AG04450 (cell line): ENCODE measurements at regions of chr1 and their contacts with region 1.

Region 1: DNA sequence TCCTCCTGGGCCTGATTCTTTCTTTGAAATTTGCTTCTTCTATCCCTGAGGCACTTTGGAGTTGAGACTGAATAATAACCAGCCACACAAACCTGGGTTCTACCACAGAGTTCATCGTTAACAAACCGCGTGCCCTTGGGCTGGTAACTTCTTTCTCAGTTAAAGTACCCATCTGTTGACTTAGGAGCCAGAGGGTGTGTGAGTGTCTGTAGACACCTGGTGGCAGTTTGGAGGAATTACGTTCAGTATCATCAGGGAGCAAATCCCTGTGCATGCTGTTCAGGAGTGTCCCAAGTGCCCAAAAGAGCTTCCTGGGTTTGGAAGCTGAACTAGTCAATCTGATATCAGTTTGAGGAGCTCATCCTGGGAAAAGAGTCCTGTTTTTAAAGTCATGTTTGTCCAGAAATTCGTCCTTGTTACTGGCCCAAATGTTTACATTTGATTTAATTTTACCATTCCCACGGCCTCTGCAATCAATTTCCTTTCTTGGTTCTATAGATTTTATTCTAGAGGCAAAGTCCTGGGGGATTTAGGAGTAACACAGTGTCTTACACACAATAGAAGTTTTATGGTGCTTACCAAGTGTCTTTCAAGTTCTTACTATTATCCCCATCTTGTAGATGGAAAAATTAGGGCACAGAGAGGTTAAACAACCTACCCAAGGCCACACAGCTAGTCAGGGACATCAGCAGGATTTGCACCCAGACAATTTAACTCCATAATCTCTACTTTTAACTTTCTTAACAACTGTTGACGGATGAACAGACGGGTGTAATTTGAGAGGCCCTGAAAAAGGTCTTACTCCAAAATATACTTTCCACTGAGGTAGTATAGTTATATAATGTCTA is 26.7 kb upstream of the RPTN start:
- DNase-seq: peak; percentile 26
- H3K4me3 ChIP-seq: no peak overlapping the region
- H3K27ac ChIP-seq: no peak overlapping the region
- H3K27me3 ChIP-seq: no peaks in the 10 kb centered on the region
- CTCF ChIP-seq: peak; percentile 84

Region 2: DNA sequence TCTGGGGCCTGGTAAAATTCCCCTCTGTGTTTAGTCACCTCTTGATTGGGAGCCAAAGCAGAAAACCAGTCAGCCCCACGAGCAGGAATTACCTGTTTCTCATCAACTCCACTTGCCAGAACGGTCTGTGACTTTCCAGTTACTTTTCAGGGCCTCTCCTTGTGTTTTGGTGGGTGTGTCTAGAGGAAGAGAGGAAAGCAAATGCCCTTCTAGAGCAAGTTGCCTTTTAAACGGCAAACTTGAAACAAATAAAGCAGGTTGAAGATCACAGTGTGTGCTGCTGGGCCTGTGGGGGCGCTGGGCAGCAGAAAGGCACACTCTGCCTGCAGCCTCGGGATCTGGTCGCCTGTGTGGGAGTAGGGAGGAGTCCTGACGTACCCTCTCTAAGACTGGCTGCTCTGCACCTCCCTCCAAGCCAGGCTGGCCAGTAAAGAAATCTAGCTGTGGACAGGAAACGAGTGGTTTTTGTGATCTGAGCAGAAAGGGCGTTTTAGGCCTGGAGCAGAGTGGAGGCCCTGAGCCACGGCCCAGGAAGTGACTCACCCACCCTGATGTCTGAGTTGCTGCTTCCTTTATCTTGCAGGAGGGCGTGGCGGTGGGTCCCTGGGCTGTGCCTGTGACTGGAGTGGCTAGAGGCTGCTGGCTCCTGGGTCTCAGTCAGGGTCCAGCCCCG is 137.9 kb before region 1 on chr1:
- CTCF ChIA-PET with region 1: interaction called, 98 read pairs
- POLR2A ChIA-PET with region 1: no interaction called
- DNase-seq: peak; percentile 97
- H3K4me3 ChIP-seq: peak overlapping the region; percentile 50
- H3K27ac ChIP-seq: peak overlapping the region; percentile 99
- H3K27me3 ChIP-seq: peaks cover 3% of the 10 kb centered on the region
- CTCF ChIP-seq: peak; percentile 75

Region 3: DNA sequence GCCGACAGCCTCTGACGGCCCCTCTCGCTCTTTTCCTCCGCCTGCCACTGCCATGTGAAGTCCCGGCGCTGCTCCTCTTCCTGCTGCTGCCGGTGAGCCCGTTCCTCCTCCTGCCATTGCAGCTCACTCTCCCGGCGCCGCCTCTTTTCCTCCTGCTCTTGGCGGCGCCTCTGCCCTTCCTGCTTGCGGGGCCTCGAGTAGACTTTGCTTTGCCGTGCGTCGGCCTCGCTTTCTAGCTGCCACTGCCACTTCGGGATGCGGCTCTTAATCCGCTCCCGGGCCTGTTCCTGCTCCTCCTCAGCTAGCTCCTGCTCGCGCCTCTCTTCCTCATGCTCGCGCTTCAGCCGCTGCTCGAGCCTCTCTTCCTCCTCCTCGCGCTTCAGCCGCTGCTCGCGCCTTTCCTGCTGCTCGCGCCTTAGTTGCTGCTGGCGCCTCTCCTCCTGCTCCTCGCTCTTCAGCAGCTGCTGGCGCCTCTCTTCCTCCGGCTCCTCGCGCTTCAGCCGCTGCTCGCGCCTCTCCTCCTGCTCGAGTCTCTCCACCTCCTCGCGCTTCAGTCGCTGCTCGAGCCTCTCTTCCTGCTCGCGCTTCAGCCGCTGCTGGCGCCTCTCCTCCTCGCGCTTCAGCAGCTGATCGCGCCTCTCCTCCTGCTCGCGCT is 74.8 kb before region 1 on chr1:
- CTCF ChIA-PET with region 1: no interaction called
- POLR2A ChIA-PET with region 1: interaction called, 18 read pairs
- DNase-seq: no peak
- H3K4me3 ChIP-seq: peak overlapping the region; percentile 53
- H3K27ac ChIP-seq: no peak overlapping the region
- H3K27me3 ChIP-seq: peaks cover 74% of the 10 kb centered on the region
- CTCF ChIP-seq: no peak

Region 4: DNA sequence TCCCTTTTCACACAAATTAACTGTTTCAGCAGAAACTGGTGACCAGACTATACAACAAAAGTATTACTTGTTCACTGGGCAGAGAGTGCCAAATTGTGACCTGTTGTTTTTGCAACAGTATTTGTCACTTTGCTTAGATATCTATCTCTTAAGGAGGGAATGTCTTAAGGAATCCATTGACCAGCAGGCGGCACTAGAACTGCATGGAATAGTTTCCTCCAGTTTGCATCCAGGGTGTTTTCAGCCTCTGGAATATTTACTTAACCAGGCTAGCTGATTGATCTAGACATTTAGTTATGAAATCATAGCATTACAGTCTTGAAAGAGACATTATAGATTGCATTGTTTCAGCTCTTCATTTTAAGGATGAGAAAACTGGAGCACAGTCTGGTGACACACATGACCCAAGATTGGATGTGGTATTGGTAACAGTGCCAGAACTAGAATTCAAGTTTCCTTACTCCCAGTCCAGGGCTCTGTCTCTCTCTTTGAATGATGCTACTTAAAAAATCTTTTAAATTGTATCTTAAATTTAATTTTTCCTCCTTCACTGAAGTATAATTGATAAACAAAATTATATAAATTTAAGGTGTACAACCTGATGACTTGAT is 43.7 kb before region 1 on chr1:
- CTCF ChIA-PET with region 1: interaction called, 36 read pairs
- POLR2A ChIA-PET with region 1: no interaction called
- DNase-seq: no peak
- H3K4me3 ChIP-seq: no peak overlapping the region
- H3K27ac ChIP-seq: no peak overlapping the region
- H3K27me3 ChIP-seq: peaks cover 2% of the 10 kb centered on the region
- CTCF ChIP-seq: peak; percentile 77

Region 5: DNA sequence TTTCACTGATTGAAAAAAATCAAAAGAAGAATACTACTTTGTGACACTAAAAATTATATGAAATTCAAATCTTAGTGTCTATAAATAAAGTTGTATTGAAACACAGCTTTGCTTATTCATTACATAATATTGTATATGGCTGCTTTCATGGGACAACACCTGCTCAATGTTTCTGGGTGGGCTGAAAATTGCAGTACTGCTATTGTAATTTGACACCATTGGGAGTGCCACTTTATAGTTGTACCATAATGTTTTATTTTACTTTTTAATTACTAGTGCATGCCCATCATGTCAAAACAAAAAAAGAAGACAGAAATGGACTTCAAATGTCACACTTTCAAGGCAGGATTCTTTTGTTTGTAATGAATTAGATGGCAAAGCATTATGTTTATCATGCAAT is 10.2 kb before region 1 on chr1:
- CTCF ChIA-PET with region 1: interaction called, 29 read pairs
- POLR2A ChIA-PET with region 1: no interaction called
- DNase-seq: no peak
- H3K4me3 ChIP-seq: no peak overlapping the region
- H3K27ac ChIP-seq: no peak overlapping the region
- H3K27me3 ChIP-seq: no peaks in the 10 kb centered on the region
- CTCF ChIP-seq: no peak

Region 6: DNA sequence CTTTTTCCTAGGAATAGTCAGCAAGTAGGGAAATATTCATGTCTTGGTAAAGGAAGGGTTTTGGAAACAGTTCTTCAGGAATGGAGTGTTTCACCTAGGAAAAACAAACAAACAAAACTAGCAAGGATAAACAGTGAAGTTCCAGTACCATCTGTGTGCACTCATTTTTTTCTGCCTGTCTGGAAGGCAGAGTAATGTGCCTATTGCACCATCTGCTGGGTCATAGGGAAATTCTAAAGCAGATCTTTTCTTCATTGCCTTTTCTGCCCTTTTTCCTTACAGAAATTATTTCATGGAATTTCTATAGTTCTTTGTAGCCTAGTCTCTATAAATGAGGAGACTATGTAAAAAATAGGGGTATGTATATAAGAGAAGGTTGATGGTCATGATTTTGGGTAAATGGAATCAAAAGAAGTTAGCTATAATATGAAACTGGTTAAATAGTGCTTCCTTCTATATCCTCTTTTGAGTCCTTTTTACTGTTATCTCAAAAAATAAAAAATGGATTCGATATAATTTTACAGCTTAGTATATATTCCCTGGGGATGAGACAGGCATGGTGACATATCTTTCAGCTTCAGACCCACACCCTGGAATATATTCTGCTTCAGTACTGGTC is 41.7 kb after region 1 on chr1:
- CTCF ChIA-PET with region 1: no interaction called
- POLR2A ChIA-PET with region 1: no interaction called
- DNase-seq: no peak
- H3K4me3 ChIP-seq: no peak overlapping the region
- H3K27ac ChIP-seq: no peak overlapping the region
- H3K27me3 ChIP-seq: no peaks in the 10 kb centered on the region
- CTCF ChIP-seq: no peak